A549 (cell line): ENCODE measurements at regions of chr2 and their contacts with region 1.

Region 1: DNA sequence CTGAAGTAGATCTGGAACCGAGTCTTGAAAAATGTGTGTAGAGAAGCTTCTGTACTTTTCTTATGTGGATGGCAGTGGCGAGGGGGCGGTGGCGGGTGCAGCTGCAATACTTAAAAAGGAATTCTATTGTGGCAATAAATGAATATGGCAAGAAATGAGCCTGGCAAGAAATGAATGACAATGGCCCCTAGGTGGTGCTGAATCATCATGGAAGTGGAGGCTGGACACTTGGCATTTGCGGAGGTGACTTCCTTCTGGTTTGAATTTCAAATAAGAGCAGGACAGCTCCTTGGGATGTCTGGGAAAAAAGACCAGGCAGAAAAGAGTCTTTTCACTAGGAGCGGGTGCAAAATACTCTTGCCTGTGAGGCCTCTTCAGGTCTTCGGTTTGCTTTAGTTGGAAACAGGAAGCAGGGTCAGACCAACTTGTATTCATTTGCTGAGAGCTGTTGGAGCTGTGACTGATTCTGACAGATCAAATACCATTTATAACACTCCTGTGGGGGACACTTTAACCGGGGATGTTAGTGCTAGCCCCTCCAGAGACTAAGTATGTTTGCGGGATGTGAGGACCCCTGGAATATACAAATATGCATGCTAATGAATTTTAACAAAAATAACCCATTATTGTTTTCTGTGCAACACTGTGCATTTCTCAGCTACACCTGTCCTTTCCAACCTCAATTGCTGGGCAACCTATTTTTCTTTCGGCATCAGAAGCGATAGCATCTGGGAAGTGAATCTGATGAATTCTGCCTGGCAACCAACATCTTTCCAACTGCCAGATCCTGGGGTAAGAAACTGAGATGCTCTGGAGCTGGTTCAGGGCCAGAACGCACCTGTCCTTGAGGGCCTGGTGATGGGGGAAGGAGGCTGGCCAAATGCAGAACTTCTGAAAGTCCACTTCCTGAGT is 35.4 kb downstream of the FASTKD2 start:
- DNase-seq: peak; percentile 38 to 72
- ATAC-seq: peak; percentile 83 to 90
- H3K4me3 ChIP-seq: no peak overlapping the region
- H3K27ac ChIP-seq: no peak overlapping the region
- H3K4me1 ChIP-seq: no peaks in the 10 kb centered on the region
- CTCF ChIP-seq: peak; percentile 86
- EP300 ChIP-seq: no peak
- POLR2A ChIP-seq: no peak
- RAD21 ChIP-seq: peak; percentile 93

Region 2: GRCh38 chr2:205605628-205606304 is 1195.0 kb before region 1 on chr2:
- CTCF ChIA-PET with region 1: no interaction called
- POLR2A ChIA-PET with region 1: no interaction called
- DNase-seq: no peak
- ATAC-seq: no peak
- H3K4me3 ChIP-seq: no peak overlapping the region
- H3K27ac ChIP-seq: no peak overlapping the region
- H3K4me1 ChIP-seq: no peaks in the 10 kb centered on the region
- CTCF ChIP-seq: no peak
- EP300 ChIP-seq: no peak
- POLR2A ChIP-seq: no peak
- RAD21 ChIP-seq: no peak

Region 3: GRCh38 chr2:206368933-206369569 is 431.7 kb before region 1 on chr2:
- CTCF ChIA-PET with region 1: no interaction called
- POLR2A ChIA-PET with region 1: no interaction called
- DNase-seq: no peak
- ATAC-seq: no peak; a peak in 1 of 6 replicates
- H3K4me3 ChIP-seq: no peak overlapping the region
- H3K27ac ChIP-seq: no peak overlapping the region
- H3K4me1 ChIP-seq: no peaks in the 10 kb centered on the region
- CTCF ChIP-seq: no peak
- EP300 ChIP-seq: no peak
- POLR2A ChIP-seq: no peak
- RAD21 ChIP-seq: no peak

Region 4: GRCh38 chr2:206783718-206784117 is 17.0 kb before region 1 on chr2:
- CTCF ChIA-PET with region 1: interaction called, 14 read pairs
- POLR2A ChIA-PET with region 1: no interaction called
- DNase-seq: peak in 1 of 2 experiments; percentile 19
- ATAC-seq: peak; percentile 93 to 95; a peak in 5 of 6 replicates
- H3K4me3 ChIP-seq: no peak overlapping the region
- H3K27ac ChIP-seq: no peak overlapping the region
- H3K4me1 ChIP-seq: no peaks in the 10 kb centered on the region
- CTCF ChIP-seq: peak; percentile 46
- EP300 ChIP-seq: no peak
- POLR2A ChIP-seq: no peak
- RAD21 ChIP-seq: no peak

Region 5: GRCh38 chr2:206790311-206790935 is 10.3 kb before region 1 on chr2:
- CTCF ChIA-PET with region 1: interaction called, 21 read pairs
- POLR2A ChIA-PET with region 1: no interaction called
- DNase-seq: no peak
- ATAC-seq: no peak
- H3K4me3 ChIP-seq: no peak overlapping the region
- H3K27ac ChIP-seq: no peak overlapping the region
- H3K4me1 ChIP-seq: no peaks in the 10 kb centered on the region
- CTCF ChIP-seq: no peak
- EP300 ChIP-seq: no peak
- POLR2A ChIP-seq: no peak
- RAD21 ChIP-seq: no peak

Region 6: GRCh38 chr2:206814498-206814897 is 13.7 kb after region 1 on chr2:
- CTCF ChIA-PET with region 1: interaction called, 15 read pairs
- POLR2A ChIA-PET with region 1: no interaction called
- DNase-seq: no peak
- ATAC-seq: no peak
- H3K4me3 ChIP-seq: no peak overlapping the region
- H3K27ac ChIP-seq: no peak overlapping the region
- H3K4me1 ChIP-seq: no peaks in the 10 kb centered on the region
- CTCF ChIP-seq: no peak
- EP300 ChIP-seq: no peak
- POLR2A ChIP-seq: no peak
- RAD21 ChIP-seq: no peak